Activated CD4-positive, alpha-beta memory T cell treated with anti-CD3 and anti-CD28 coated beads, Interleukin-2, amount 10 ng/mL, durations not matched to agents 7 days and 5 days (primary cell): ENCODE measurements at regions of chr20 and their contacts with region 1.

Region 1: GRCh38 chr20:33862709-33863403 is 51.7 kb downstream of the CHMP4B start:
- DNase-seq: peak; percentile 58
- H3K4me3 Mint-ChIP-seq: no peak overlapping the region
- H3K27ac Mint-ChIP-seq: no peak overlapping the region
- H3K4me1 Mint-ChIP-seq: peaks cover 28% of the 10 kb centered on the region
- H3K27me3 Mint-ChIP-seq: no peaks in the 10 kb centered on the region

Region 2: GRCh38 chr20:33837998-33838864 is 24.6 kb before region 1 on chr20:
- CTCF ChIA-PET with region 1: no interaction called
- POLR2A ChIA-PET with region 1: interaction called, 11 read pairs
- DNase-seq: no peak
- H3K4me3 Mint-ChIP-seq: no peak overlapping the region
- H3K27ac Mint-ChIP-seq: no peak overlapping the region
- H3K4me1 Mint-ChIP-seq: peaks cover 50% of the 10 kb centered on the region
- H3K27me3 Mint-ChIP-seq: no peaks in the 10 kb centered on the region

Region 3: GRCh38 chr20:33848391-33848790 is 14.5 kb before region 1 on chr20:
- CTCF ChIA-PET with region 1: interaction called, 6 read pairs
- POLR2A ChIA-PET with region 1: interaction called, 12 read pairs
- DNase-seq: no peak
- H3K4me3 Mint-ChIP-seq: no peak overlapping the region
- H3K27ac Mint-ChIP-seq: no peak overlapping the region
- H3K4me1 Mint-ChIP-seq: peaks cover 65% of the 10 kb centered on the region
- H3K27me3 Mint-ChIP-seq: no peaks in the 10 kb centered on the region

Region 4: DNA sequence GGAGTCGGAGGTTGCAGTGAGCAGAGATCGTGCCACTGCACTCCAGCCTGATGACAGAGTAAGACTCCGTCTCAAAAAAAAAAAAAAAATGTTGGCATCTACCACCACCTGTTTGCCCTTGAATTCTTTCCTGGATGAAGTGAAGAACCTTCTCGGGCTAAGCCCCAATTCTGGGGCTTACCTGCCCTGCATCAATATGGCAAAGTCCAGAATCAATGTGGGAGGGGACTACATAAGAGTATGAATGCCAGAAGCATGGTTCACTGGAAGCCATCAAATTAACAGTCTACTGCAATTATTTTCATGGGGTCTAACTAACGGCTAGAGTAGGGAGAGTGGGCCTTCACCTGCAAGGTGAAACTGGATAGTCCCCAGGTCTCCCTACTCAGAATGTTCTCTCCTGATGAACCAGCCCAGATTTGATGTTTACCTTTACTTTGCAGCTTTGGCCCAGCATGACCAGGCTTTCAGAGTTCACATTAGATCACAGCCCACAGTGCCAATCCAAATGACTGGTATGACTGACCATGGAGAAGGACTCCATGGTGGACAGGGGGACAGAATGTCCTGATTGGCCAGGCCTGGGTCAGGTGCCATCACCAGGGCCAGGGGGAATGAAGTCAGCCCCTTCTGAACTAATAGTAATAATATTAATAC is 123.8 kb after region 1 on chr20:
- CTCF ChIA-PET with region 1: no interaction called
- POLR2A ChIA-PET with region 1: no interaction called
- DNase-seq: no peak
- H3K4me3 Mint-ChIP-seq: no peak overlapping the region
- H3K27ac Mint-ChIP-seq: no peak overlapping the region
- H3K4me1 Mint-ChIP-seq: peaks cover 13% of the 10 kb centered on the region
- H3K27me3 Mint-ChIP-seq: peaks cover 2% of the 10 kb centered on the region